ENCODE measurements at regions of chr2 and their contacts with region 1.

Region 1: GRCh38 chr2:162221064-162221463 is 22.2 kb downstream of the FAP start:
- DNase-seq: peak; percentile 71
- H3K4me3 ChIP-seq: no peak overlapping the region
- H3K27ac ChIP-seq: no peak overlapping the region
- H3K4me1 ChIP-seq: no peaks in the 10 kb centered on the region
- H3K27me3 ChIP-seq: no peaks in the 10 kb centered on the region
- CTCF ChIP-seq: peak; percentile 88 to 92
- POLR2A ChIP-seq: no peak

Region 2: DNA sequence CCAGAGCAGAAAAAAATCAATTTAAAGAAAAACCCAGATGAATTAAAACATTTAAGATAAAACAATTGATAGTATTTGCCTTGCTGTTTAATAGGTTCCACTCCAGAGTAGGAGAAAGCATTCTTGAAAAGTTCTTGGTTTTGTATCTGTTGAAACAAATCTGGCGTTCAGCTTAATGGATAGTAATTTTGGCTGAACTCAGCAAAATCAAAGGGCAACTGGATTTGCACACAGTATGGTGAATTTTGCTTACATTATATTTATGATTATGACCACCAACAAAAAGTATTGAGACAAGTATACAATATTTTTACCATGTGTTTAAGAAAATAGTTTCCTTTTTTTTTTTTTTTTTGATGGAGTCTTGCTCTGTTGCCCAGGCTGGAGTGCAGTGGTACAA is 562.8 kb before region 1 on chr2:
- CTCF ChIA-PET with region 1: no interaction called
- POLR2A ChIA-PET with region 1: no interaction called
- dilution Hi-C with region 1: no loop called
- intact Hi-C with region 1: no loop called
- DNase-seq: no peak
- H3K4me3 ChIP-seq: no peak overlapping the region
- H3K27ac ChIP-seq: no peak overlapping the region
- H3K4me1 ChIP-seq: no peaks in the 10 kb centered on the region
- H3K27me3 ChIP-seq: no peaks in the 10 kb centered on the region
- CTCF ChIP-seq: no peak
- POLR2A ChIP-seq: no peak

Region 3: DNA sequence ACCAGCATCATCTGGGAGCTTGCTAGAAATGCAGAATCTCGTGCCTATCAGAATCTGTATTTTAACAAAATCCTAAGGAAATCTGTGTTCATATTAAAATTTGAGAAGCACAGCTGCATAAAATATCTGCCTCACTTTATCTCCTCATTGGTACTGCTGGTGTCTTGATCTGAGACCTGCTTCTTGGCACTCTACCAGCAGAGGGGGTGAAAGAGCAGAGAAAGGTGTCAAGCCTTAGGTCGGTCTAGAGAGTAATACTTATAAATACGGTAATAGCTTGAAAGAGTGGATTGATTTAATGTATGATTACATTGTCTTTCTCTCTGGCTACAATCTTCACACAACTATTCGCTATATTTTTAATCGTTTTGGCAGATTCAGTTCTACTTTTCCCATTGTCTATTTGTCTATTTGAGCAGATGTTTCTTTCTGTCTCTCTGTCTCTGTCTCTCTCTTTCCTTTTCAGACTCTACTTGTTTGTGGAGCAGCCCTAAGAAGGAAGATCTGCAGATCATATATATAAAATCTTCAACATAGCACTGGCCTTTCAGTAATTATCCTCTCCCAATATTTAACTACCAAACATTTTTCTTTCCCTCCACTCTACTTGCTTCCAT is 67.3 kb before region 1 on chr2:
- CTCF ChIA-PET with region 1: interaction called, 27 read pairs
- POLR2A ChIA-PET with region 1: no interaction called
- dilution Hi-C with region 1: no loop called
- intact Hi-C with region 1: loop called (anchors 2 kb)
- DNase-seq: peak; percentile 66
- H3K4me3 ChIP-seq: no peak overlapping the region
- H3K27ac ChIP-seq: no peak overlapping the region
- H3K4me1 ChIP-seq: peaks cover 3% of the 10 kb centered on the region
- H3K27me3 ChIP-seq: peaks cover 1 to 20% of the 10 kb centered on the region in 2 experiments
- CTCF ChIP-seq: peak; percentile 59 to 69
- POLR2A ChIP-seq: no peak

Region 4: DNA sequence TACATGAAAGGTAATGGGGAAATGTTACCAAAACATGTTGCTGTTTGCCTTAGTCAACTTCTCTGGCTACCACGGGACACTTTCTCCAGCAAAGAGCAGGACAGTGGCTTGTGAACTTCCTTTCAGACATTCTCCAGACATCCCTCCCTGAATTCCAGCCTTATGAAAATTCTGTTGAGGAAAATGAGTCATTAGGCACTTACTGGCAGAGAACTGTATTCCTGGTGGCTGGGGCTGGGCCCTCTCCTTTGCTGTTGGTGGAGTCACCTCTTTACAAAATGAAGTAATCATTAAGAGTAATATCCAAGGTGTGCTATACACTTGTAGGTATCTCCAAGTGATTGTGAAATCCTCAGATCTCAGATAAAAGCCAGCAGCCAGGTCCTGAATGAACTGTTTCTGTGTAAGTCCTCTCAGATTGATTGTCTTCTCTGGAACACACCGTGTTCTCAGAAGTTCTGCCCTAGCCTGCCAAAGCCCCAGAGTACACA is 23.5 kb after region 1 on chr2:
- CTCF ChIA-PET with region 1: interaction called, 19 read pairs
- POLR2A ChIA-PET with region 1: no interaction called
- dilution Hi-C with region 1: no loop called
- intact Hi-C with region 1: no loop called
- DNase-seq: peak; percentile 91
- H3K4me3 ChIP-seq: no peak overlapping the region
- H3K27ac ChIP-seq: peak overlapping the region; percentile 81
- H3K4me1 ChIP-seq: peaks cover 19% of the 10 kb centered on the region
- H3K27me3 ChIP-seq: no peaks in the 10 kb centered on the region
- CTCF ChIP-seq: no peak
- POLR2A ChIP-seq: no peak

Region 5: GRCh38 chr2:162282765-162283425 is 61.8 kb after region 1 on chr2:
- CTCF ChIA-PET with region 1: interaction called, 1,052 read pairs
- POLR2A ChIA-PET with region 1: no interaction called
- dilution Hi-C with region 1: no loop called
- intact Hi-C with region 1: no loop called
- DNase-seq: no peak
- H3K4me3 ChIP-seq: no peak overlapping the region
- H3K27ac ChIP-seq: no peak overlapping the region
- H3K4me1 ChIP-seq: no peaks in the 10 kb centered on the region
- H3K27me3 ChIP-seq: no peaks in the 10 kb centered on the region
- CTCF ChIP-seq: no peak
- POLR2A ChIP-seq: no peak

Region 6: DNA sequence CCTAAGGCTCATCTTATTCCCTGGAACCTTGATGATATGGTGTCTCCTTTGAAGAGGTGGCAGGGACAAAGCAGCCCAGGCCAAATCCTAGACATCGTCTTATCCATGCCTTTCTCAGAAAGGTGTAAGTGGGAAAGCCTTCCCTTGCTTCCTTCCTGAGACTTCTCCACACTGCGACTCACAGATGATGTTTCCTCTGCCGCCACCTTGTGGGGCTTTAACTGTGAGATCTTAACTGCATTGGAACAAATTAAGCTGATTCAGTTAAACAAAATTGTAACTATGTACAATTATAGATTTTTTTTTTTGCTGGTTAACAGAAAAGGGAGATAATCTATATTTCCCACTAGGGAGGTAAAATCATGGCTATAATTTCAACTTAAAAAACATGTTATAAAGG is 112.9 kb after region 1 on chr2:
- CTCF ChIA-PET with region 1: interaction called, 22 read pairs
- POLR2A ChIA-PET with region 1: no interaction called
- dilution Hi-C with region 1: no loop called
- intact Hi-C with region 1: no loop called
- DNase-seq: peak; percentile 35
- H3K4me3 ChIP-seq: no peak overlapping the region
- H3K27ac ChIP-seq: no peak overlapping the region
- H3K4me1 ChIP-seq: no peaks in the 10 kb centered on the region
- H3K27me3 ChIP-seq: peaks cover 0 to 2% of the 10 kb centered on the region in 2 experiments
- CTCF ChIP-seq: peak; percentile 19 to 26
- POLR2A ChIP-seq: no peak